Posterior vena cava (tissue), 2 donors: ENCODE measurements at regions of chr7 and their contacts with region 1.

Region 1: GRCh38 chr7:142853739-142854371 is 1.0 kb upstream of the EPHB6 start:
- DNase-seq: peak; percentile 88

Region 2: DNA sequence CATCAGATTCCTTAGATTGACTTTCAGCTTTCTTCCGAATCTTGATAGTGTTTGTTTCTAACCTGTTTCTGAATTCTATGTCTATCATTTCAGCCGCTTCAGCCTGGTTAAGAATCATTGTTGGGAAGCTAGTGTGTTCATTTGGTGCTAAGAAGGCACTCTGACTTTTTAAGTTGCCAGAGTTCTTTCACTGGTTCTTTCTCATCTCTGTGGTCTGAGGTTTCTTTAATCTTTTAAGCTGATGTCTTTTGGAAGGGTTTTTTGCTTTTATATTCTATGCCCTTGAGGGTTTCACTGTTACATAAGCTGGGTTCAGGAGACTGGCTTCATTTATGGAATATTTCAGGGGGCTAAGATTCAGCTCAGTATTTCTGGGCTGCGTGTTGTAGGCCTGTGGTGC is 491.5 kb before region 1 on chr7:
- intact Hi-C with region 1: no loop called
- DNase-seq: no peak

Region 3: DNA sequence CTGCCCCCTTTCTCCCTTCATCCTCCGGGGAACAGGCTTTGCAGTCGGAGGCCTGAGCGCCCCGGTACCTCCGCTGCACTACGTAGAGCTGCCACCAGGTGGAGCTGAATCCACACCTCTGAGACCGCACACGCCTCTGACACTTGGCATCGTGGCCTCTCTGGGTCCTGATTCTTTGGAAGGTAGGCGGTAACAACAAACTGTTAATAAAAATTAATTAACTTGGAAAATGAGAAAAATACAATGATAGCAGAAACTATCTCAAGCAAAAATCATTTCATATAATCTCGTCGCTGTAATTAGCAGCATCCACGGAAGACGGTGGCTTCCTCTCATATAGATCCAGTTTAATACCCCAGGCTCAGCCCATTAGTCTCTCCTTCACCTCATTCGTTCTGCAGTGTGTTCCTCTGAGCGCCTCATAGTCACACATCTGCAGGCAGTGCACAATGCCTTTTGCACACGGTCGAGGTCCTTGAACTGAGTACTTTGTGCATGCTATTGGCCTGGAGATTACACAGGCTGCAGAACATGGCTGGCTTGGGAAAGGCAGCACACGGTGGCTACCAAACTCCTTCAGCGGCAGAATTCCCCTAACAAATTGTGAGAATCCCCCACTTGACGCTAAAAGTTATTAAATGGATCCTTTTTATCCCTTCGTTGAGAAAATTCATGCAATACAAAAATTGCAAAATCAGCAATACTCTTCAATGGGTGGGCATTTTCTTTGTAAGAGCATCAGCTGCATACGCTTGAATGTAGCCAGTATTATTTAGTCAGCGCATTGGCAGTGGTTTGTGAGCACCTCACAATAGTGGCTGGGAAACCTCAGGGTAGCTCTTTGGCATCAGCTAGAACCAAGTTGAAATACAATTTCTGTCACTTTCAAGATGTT is 154.4 kb after region 1 on chr7:
- intact Hi-C with region 1: loop called in 1 of 2 experiments (anchors 5 kb)
- DNase-seq: peak; percentile 95